Vagina (tissue), 2 donors: ENCODE measurements at regions of chr9 and their contacts with region 1.

Region 1: GRCh38 chr9:87684627-87685219 is 41.2 kb upstream of the CTSL start:
- DNase-seq: peak in 1 of 2 donors; percentile 71
- H3K4me3 ChIP-seq: no peak overlapping the region
- H3K27ac ChIP-seq: no peak overlapping the region
- H3K4me1 ChIP-seq: no peaks in the 10 kb centered on the region
- H3K27me3 ChIP-seq: no peaks in the 10 kb centered on the region
- CTCF ChIP-seq: peak; percentile 38 to 57 (median 50)
- POLR2A ChIP-seq: no peak

Region 2: DNA sequence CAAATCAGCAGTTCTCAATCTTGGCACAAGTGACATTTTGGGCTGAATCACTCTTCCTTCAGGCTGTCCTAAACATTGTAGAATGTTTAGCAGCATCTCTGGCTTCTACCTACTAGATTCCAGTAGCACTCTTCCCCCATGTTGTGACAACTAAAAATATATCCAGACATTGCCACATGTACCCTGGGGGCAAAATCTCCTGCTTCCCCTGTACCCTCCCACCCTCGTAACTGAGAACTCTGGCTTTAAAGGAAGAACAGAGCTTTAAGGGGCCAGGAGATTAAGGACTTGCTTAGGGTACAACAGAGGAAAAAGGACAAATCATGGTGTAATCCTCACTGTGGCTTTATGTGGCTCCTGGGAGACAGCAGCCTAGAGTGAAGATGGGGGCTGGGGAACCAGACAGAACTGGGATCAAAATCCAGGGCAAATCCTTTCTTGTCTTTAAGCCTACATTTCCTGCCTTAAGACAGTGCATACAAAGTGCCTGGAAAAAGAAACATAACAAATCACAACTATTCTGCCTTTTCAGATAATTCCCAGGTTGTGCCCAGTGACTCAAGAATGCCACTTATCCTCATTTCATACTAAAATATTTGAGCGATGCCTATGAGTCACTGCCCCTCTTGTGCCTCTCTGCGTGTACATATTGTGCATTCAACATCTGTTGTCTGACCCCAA is 77.7 kb before region 1 on chr9:
- intact Hi-C with region 1: no loop called
- DNase-seq: no peak
- H3K4me3 ChIP-seq: no peak overlapping the region
- H3K27ac ChIP-seq: no peak overlapping the region
- H3K4me1 ChIP-seq: no peaks in the 10 kb centered on the region
- H3K27me3 ChIP-seq: no peaks in the 10 kb centered on the region
- CTCF ChIP-seq: no peak
- POLR2A ChIP-seq: no peak

Region 3: GRCh38 chr9:87701931-87702421 is 17.3 kb after region 1 on chr9:
- intact Hi-C with region 1: no loop called
- DNase-seq: no peak
- H3K4me3 ChIP-seq: no peak overlapping the region
- H3K27ac ChIP-seq: no peak overlapping the region
- H3K4me1 ChIP-seq: no peaks in the 10 kb centered on the region
- H3K27me3 ChIP-seq: no peaks in the 10 kb centered on the region
- CTCF ChIP-seq: no peak
- POLR2A ChIP-seq: no peak

Region 4: GRCh38 chr9:89278997-89279739 is 1594.4 kb after region 1 on chr9:
- intact Hi-C with region 1: loop called (anchors 10 kb)
- DNase-seq: no peak
- H3K4me3 ChIP-seq: no peak overlapping the region
- H3K27ac ChIP-seq: no peak overlapping the region
- H3K4me1 ChIP-seq: peaks cover 11% of the 10 kb centered on the region
- H3K27me3 ChIP-seq: no peaks in the 10 kb centered on the region
- CTCF ChIP-seq: peak; percentile 40 to 73 (median 53)
- POLR2A ChIP-seq: no peak